ENCODE measurements at regions of chr1 and their contacts with region 1.

Region 1: GRCh38 chr1:170670802-170671628 is 7.1 kb downstream of the PRRX1 start:
- DNase-seq: peak; percentile 63 to 85 (median 84)
- ATAC-seq: peak; percentile 63 to 64
- H3K4me3 ChIP-seq: peak overlapping the region; percentile 16
- H3K27ac ChIP-seq: no peak overlapping the region
- H3K4me1 ChIP-seq: no peaks in the 10 kb centered on the region
- H3K27me3 ChIP-seq: no peaks in the 10 kb centered on the region

Region 2: GRCh38 chr1:170707959-170708655 is 37.1 kb after region 1 on chr1:
- intact Hi-C with region 1: no loop called
- DNase-seq: no peak
- ATAC-seq: peak; percentile 79 to 95
- H3K4me3 ChIP-seq: no peak overlapping the region
- H3K27ac ChIP-seq: no peak overlapping the region
- H3K4me1 ChIP-seq: no peaks in the 10 kb centered on the region
- H3K27me3 ChIP-seq: no peaks in the 10 kb centered on the region

Region 3: DNA sequence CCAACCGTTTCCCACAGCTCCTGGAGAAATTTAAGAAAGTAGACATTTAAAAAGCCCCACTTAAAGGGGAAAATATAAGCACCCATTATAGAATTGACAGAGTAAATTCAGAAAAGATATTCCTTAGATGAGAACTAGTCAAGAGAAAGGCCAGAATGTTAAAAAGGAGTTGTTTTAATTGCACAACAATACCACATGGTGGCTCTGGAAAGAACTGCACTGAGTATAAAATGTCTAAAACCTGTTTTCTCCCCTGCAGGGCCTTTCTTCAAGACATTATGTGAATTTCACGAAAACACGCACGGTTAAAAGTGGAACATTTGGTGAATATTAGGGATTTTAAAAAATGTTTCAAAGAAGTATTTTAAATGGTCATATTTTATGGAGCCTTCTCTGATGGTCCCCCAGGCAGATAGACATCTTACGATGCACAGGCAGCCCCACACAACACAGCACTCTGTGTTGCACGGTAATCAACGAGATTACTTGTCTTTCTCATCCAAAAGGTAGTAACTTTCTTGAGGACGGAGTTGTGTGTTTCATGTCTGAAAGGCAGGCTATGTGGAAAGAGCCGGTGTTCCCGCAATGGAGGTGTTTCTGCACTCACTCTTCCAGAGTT is 94.8 kb after region 1 on chr1:
- intact Hi-C with region 1: loop called in 1 of 4 experiments (anchors 5 kb)
- DNase-seq: no peak
- ATAC-seq: peak in 1 of 2 donors; percentile 62
- H3K4me3 ChIP-seq: no peak overlapping the region
- H3K27ac ChIP-seq: no peak overlapping the region
- H3K4me1 ChIP-seq: no peaks in the 10 kb centered on the region
- H3K27me3 ChIP-seq: no peaks in the 10 kb centered on the region

Measured in right cardiac atrium (tissue), 5 donors.